H1 (cell line): ENCODE measurements at regions of chr6 and their contacts with region 1.

Region 1: DNA sequence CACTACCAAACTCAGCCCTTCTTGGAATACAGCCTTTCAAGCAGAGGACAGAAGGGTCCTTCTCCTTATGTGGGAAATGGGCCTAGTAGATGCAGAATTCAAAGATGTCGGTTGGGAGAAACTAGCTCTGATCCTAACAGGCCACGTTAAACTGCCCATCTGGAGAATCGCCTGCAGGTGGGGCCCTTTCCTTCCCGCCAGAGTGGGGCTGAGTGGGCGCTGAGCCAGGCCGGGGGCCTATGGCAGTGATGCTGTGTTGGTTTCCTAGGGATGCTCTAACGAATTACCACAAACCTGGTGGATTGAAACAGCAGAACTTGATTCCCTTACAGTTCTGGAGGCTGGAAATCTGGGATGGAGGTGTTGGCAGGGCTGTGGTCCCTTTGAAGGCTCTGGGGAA is 9.1 kb downstream of the MAPK13 start:
- DNase-seq: peak in 1 of 2 experiments; percentile 81
- H3K4me3 ChIP-seq: no peak overlapping the region
- H3K27ac ChIP-seq: no peak overlapping the region
- H3K4me1 ChIP-seq: peaks cover 0 to 6% (median 0%) of the 10 kb centered on the region in 4 experiments; a peak in 3 of 7 replicates
- H3K27me3 ChIP-seq: no peaks in the 10 kb centered on the region
- CTCF ChIP-seq: peak in 2 of 3 experiments; percentile 77 to 82; a peak in 3 of 4 replicates
- EP300 ChIP-seq: no peak
- POLR2A ChIP-seq: no peak
- RAD21 ChIP-seq: peak; percentile 83 to 89

Region 2: GRCh38 chr6:36120979-36121786 is 18.2 kb before region 1 on chr6:
- CTCF ChIA-PET with region 1: interaction called, 19 read pairs
- POLR2A ChIA-PET with region 1: interaction called, 4 read pairs
- DNase-seq: no peak
- H3K4me3 ChIP-seq: no peak overlapping the region
- H3K27ac ChIP-seq: no peak overlapping the region
- H3K4me1 ChIP-seq: peaks cover 4 to 8% (median 7%) of the 10 kb centered on the region in 4 experiments; a peak in 6 of 7 replicates
- H3K27me3 ChIP-seq: no peaks in the 10 kb centered on the region
- CTCF ChIP-seq: no peak
- EP300 ChIP-seq: no peak
- POLR2A ChIP-seq: no peak
- RAD21 ChIP-seq: no peak

Region 3: GRCh38 chr6:36150283-36150682 is 10.9 kb after region 1 on chr6:
- CTCF ChIA-PET with region 1: interaction called, 12 read pairs
- POLR2A ChIA-PET with region 1: interaction called, 4 read pairs
- DNase-seq: no peak
- H3K4me3 ChIP-seq: no peak overlapping the region
- H3K27ac ChIP-seq: no peak overlapping the region
- H3K4me1 ChIP-seq: no peaks in the 10 kb centered on the region
- H3K27me3 ChIP-seq: no peaks in the 10 kb centered on the region
- CTCF ChIP-seq: no peak
- EP300 ChIP-seq: no peak
- POLR2A ChIP-seq: no peak
- RAD21 ChIP-seq: no peak

Region 4: GRCh38 chr6:36196880-36197548 is 57.6 kb after region 1 on chr6:
- CTCF ChIA-PET with region 1: interaction called, 16 read pairs
- POLR2A ChIA-PET with region 1: interaction called, 9 read pairs
- DNase-seq: peak; percentile 96 to 100
- H3K4me3 ChIP-seq: peak overlapping the region; percentile 64 to 88 (median 66)
- H3K27ac ChIP-seq: peak overlapping the region; percentile 86; the same call in 1 of the 2 replicates
- H3K4me1 ChIP-seq: peaks cover 0 to 6% (median 1%) of the 10 kb centered on the region in 4 experiments; a peak in 4 of 7 replicates
- H3K27me3 ChIP-seq: no peaks in the 10 kb centered on the region
- CTCF ChIP-seq: no peak
- EP300 ChIP-seq: no peak
- POLR2A ChIP-seq: peak; percentile 66 to 93
- RAD21 ChIP-seq: no peak

Region 5: GRCh38 chr6:36204068-36204753 is 64.8 kb after region 1 on chr6:
- CTCF ChIA-PET with region 1: interaction called, 14 read pairs
- POLR2A ChIA-PET with region 1: no interaction called
- DNase-seq: no peak
- H3K4me3 ChIP-seq: no peak overlapping the region
- H3K27ac ChIP-seq: no peak overlapping the region
- H3K4me1 ChIP-seq: no peaks in the 10 kb centered on the region
- H3K27me3 ChIP-seq: no peaks in the 10 kb centered on the region
- CTCF ChIP-seq: no peak
- EP300 ChIP-seq: no peak
- POLR2A ChIP-seq: no peak
- RAD21 ChIP-seq: no peak